Adrenal gland (tissue), 19 donors: ENCODE measurements at regions of chr4 and their contacts with region 1.

Region 1: DNA sequence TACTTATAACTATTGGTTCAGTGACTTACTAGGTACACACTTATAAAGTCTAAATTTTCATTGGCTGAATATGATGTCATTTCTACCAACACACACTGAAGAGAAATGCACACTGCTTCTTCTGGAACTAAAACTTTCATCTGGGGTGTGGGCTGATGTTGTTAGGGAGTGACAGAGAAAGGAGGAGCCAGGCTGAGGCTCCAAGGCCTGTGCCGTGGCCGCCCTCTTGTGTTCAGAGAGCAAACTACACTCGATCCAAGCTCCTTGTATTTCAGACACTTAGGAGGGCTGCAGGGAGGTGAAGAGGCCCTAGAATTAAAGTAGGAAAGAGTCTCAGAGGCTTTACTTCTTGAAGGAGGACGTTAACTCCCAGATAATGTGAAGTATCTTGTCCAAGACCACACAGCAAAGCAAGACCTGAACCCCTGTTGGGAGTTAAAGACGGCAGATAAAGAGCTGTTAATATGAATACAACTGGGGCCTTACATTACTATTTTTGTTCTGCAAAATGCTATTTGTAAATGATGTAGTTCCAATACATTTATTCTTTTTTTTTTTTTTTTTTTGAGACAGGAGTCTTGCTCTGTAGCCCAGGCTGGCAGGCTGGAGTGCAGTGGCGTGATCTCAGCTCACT is 137.5 kb downstream of the AFAP1 start:
- DNase-seq: peak; percentile 69 to 94 (median 84)
- H3K4me3 ChIP-seq: no peak overlapping the region
- H3K27ac ChIP-seq: no peak overlapping the region
- H3K4me1 ChIP-seq: no peaks in the 10 kb centered on the region
- H3K27me3 ChIP-seq: no peaks in the 10 kb centered on the region
- CTCF ChIP-seq: peak; percentile 75 to 95 (median 88)
- POLR2A ChIP-seq: no peak

Region 2: DNA sequence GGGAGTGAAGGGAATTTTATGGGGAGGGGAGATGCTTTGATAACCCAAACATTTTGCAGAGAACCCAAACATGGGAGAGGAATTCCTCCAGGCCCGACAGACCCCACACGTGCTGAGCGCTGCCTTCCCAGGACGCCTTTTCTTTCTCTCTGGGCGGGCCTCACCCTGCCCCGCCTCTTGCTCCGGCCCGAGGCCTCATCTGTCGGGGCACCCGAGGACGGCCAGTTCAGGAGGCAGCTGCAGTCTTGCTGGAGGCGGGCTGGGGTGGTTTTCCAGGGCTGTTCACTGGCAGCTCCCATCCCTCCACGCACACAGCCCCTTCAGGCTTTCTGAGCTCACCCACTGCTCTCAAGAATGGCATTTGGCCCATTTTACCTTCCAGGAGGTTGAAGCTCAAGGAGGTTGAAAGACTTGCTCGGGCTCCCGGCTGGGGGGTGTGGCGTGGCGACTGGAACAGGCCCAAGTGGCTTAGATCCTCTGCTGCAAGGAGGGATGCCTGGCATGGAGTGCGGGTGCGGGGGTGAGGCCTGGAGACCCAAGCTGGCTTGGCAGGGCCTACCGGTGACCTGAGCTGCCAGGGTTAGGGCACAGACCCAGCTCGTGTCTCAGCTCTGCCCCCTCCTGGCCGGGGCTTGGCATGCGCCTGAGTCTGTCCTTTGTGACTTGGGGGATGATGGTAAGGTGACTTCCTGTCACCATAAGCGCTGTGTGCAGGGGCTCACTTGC is 466.7 kb before region 1 on chr4:
- intact Hi-C with region 1: no loop called
- DNase-seq: peak; percentile 33 to 76 (median 64)
- H3K4me3 ChIP-seq: no peak overlapping the region
- H3K27ac ChIP-seq: no peak overlapping the region
- H3K4me1 ChIP-seq: no peaks in the 10 kb centered on the region
- H3K27me3 ChIP-seq: no peaks in the 10 kb centered on the region
- CTCF ChIP-seq: peak; percentile 39 to 73 (median 52)
- POLR2A ChIP-seq: no peak

Region 3: GRCh38 chr4:7761720-7762119 is 40.5 kb before region 1 on chr4:
- intact Hi-C with region 1: loop called (anchors 2 to 5 kb)
- DNase-seq: peak; percentile 55 to 95 (median 77)
- H3K4me3 ChIP-seq: no peak overlapping the region
- H3K27ac ChIP-seq: no peak overlapping the region
- H3K4me1 ChIP-seq: peaks cover 0 to 8% of the 10 kb centered on the region in 2 donors
- H3K27me3 ChIP-seq: no peaks in the 10 kb centered on the region
- CTCF ChIP-seq: peak; percentile 55 to 83 (median 73)
- POLR2A ChIP-seq: peak in 1 of 2 donors; percentile 9

Region 4: DNA sequence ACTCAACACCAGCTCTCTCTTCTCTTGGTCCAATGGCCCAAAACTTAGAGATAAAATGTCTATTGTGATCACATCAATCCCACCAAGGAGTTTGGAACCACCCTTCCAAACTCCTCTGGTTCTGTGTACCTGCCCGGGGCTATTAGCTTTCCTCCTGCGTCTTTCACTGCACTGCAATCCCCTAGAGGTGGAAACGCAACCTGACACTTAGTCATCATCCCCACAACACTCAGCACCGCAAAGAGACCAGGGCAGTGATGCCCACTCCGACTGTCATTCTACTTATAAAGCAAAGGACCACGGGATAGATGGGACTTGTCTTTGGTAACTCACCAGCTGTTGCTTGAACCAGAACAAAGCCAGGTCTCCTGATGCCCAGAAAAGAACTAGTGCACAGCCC is 115.5 kb after region 1 on chr4:
- intact Hi-C with region 1: no loop called
- DNase-seq: no peak
- H3K4me3 ChIP-seq: no peak overlapping the region
- H3K27ac ChIP-seq: no peak overlapping the region
- H3K4me1 ChIP-seq: peaks cover 0 to 7% of the 10 kb centered on the region in 2 donors
- H3K27me3 ChIP-seq: no peaks in the 10 kb centered on the region
- CTCF ChIP-seq: no peak
- POLR2A ChIP-seq: no peak

Region 5: GRCh38 chr4:7987148-7987989 is 185.2 kb after region 1 on chr4:
- intact Hi-C with region 1: loop called (anchors 2 to 5 kb)
- DNase-seq: peak; percentile 67 to 91 (median 77)
- H3K4me3 ChIP-seq: no peak overlapping the region
- H3K27ac ChIP-seq: no peak overlapping the region
- H3K4me1 ChIP-seq: no peaks in the 10 kb centered on the region
- H3K27me3 ChIP-seq: no peaks in the 10 kb centered on the region
- CTCF ChIP-seq: peak; percentile 81 to 90 (median 89)
- POLR2A ChIP-seq: no peak